GM12878 (cell line): ENCODE measurements at regions of chr10 and their contacts with region 1.

Region 1: GRCh38 chr10:71708301-71708703 is 11.3 kb downstream of the C10orf105 start:
- DNase-seq: no peak
- ATAC-seq: peak; percentile 88
- H3K4me3 ChIP-seq: no peak overlapping the region
- H3K27ac ChIP-seq: no peak overlapping the region
- H3K4me1 ChIP-seq: peaks cover 8% of the 10 kb centered on the region
- H3K27me3 ChIP-seq: no peaks in the 10 kb centered on the region; a peak in 1 of 4 replicates
- CTCF ChIP-seq: peak; percentile 82 to 97 (median 93)
- EP300 ChIP-seq: no peak
- POLR2A ChIP-seq: no peak
- RAD21 ChIP-seq: peak; percentile 89

Region 2: GRCh38 chr10:71314028-71314693 is 394.1 kb before region 1 on chr10:
- CTCF ChIA-PET with region 1: interaction called, 47 read pairs
- POLR2A ChIA-PET with region 1: no interaction called
- RAD21 ChIA-PET with region 1: interaction called, 28 read pairs
- SMC1A ChIA-PET with region 1: interaction called, 8 read pairs
- in situ Hi-C with region 1: loop called (anchors 5 kb)
- intact Hi-C with region 1: loop called (anchors 2 kb)
- DNase-seq: no peak
- ATAC-seq: peak; percentile 55
- H3K4me3 ChIP-seq: no peak overlapping the region
- H3K27ac ChIP-seq: no peak overlapping the region
- H3K4me1 ChIP-seq: peaks cover 12% of the 10 kb centered on the region
- H3K27me3 ChIP-seq: no peaks in the 10 kb centered on the region
- CTCF ChIP-seq: peak; percentile 62 to 91 (median 76)
- EP300 ChIP-seq: no peak
- POLR2A ChIP-seq: no peak
- RAD21 ChIP-seq: peak; percentile 74

Region 3: GRCh38 chr10:71462062-71462935 is 246.0 kb before region 1 on chr10:
- CTCF ChIA-PET with region 1: no interaction called
- POLR2A ChIA-PET with region 1: no interaction called
- RAD21 ChIA-PET with region 1: no interaction called
- SMC1A ChIA-PET with region 1: no interaction called
- in situ Hi-C with region 1: no loop called
- intact Hi-C with region 1: no loop called
- DNase-seq: no peak
- ATAC-seq: no peak
- H3K4me3 ChIP-seq: no peak overlapping the region
- H3K27ac ChIP-seq: no peak overlapping the region
- H3K4me1 ChIP-seq: no peaks in the 10 kb centered on the region
- H3K27me3 ChIP-seq: peaks cover 0 to 6% of the 10 kb centered on the region in 2 experiments; a peak in 3 of 4 replicates
- CTCF ChIP-seq: no peak
- EP300 ChIP-seq: no peak
- POLR2A ChIP-seq: no peak
- RAD21 ChIP-seq: no peak

Region 4: GRCh38 chr10:71486484-71487114 is 221.7 kb before region 1 on chr10:
- CTCF ChIA-PET with region 1: interaction called, 8 read pairs
- POLR2A ChIA-PET with region 1: no interaction called
- RAD21 ChIA-PET with region 1: interaction called, 8 read pairs
- SMC1A ChIA-PET with region 1: interaction called, 4 read pairs
- in situ Hi-C with region 1: no loop called
- intact Hi-C with region 1: loop called (anchors 5 kb)
- DNase-seq: no peak
- ATAC-seq: peak; percentile 89
- H3K4me3 ChIP-seq: no peak overlapping the region
- H3K27ac ChIP-seq: no peak overlapping the region
- H3K4me1 ChIP-seq: no peaks in the 10 kb centered on the region
- H3K27me3 ChIP-seq: peaks cover 0 to 2% of the 10 kb centered on the region in 2 experiments; a peak in 1 of 4 replicates
- CTCF ChIP-seq: peak; percentile 65 to 71 (median 71)
- EP300 ChIP-seq: no peak
- POLR2A ChIP-seq: no peak
- RAD21 ChIP-seq: peak; percentile 65

Region 5: DNA sequence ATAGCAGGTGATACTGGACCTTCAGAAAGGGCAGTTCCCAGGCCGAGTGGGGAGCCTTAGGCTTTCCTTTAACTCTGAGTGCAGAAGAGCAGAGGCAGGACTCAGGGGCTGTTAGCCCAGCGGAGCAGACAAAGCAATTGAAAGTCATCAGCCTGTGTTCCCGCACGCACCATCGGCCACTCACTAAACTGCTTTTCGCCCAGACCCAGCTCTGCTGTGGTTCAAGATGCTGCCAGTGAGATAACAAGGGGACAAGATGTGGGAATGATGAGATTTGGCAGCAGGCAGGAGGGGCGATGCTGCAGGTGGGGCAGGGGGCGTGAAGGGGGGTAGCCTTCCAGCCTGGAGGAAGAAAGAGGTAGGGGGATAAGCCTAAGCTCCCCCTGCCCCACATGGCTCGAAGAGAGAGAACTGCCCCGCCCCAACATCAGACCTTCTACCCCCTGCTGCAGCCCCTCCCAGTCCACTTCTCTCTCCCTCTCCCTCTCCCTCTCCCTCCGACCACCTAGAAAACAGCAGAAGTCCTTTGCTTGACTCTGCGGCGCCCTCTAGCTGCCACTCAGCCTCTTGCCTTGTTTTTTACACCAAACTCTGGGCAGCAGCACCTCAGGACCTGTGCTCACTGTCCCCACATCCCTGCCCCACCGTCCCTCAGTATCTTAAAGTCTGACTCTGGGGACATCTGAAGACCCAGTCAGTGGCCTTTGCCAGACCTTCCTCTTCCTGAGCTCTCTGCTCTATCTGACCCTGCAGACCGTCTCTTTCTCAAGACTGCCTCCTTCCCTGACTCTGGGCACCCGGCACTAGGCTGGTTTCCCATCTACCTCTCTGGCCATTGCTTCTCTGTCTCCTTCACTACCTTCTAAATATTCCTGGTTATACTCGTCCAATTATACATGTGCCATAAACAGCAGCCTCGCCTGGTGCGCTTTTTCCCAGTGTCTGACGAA is 99.2 kb before region 1 on chr10:
- CTCF ChIA-PET with region 1: interaction called, 16 read pairs
- POLR2A ChIA-PET with region 1: no interaction called
- RAD21 ChIA-PET with region 1: interaction called, 6 read pairs
- SMC1A ChIA-PET with region 1: interaction called, 8 read pairs
- in situ Hi-C with region 1: no loop called
- intact Hi-C with region 1: no loop called
- DNase-seq: no peak
- ATAC-seq: peak; percentile 82
- H3K4me3 ChIP-seq: no peak overlapping the region
- H3K27ac ChIP-seq: no peak overlapping the region
- H3K4me1 ChIP-seq: no peaks in the 10 kb centered on the region
- H3K27me3 ChIP-seq: no peaks in the 10 kb centered on the region; a peak in 2 of 4 replicates
- CTCF ChIP-seq: peak; percentile 75 to 84 (median 80)
- EP300 ChIP-seq: no peak
- POLR2A ChIP-seq: no peak
- RAD21 ChIP-seq: peak; percentile 64

Region 6: DNA sequence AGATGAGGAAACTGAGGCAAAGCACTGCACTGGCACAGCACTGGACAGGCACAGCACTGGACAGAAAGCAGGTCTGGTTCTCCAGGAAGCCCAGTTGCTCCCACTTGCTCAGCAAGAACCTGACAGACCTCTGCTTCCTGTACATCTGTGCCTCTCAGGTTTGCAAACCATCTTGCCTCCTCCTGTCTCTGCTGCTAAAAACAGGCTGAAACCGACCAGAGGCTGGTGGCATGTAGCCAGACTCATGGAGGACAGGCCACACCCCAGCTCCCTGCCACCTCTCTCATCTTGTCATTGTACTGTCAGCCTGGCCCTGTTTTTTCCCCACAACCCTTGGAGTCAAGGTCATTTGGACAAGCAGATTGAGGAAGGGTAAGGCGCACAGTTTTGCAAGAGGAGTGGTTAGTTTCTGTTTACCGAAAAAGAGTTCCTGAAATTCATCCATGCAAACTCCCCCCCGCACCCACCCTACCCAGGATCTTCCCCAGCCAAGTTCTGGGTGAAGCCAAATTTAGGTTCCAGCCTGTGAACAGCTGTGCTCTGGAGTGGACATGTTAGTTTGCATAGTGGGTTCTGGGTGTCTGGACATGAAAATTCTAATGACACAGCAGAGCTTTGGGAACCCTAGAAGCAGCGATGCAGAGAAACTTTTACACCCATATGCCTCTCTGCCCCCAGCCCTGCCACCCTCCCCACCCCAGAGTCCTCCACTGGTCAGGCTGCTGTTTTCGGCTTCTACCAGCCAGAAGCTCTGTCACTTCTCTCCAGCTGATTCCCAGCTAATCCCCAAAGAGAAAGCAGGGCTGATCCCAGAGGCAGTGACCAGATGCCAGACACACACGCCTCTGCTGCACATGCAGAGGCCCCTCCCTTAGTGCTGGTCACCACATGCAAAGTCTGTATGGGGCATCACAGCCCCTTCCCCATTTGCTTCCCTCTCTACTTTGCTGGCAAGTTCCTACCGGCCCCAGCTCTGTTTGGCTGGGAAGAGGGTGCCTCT is 19.7 kb after region 1 on chr10:
- CTCF ChIA-PET with region 1: interaction called, 25 read pairs
- POLR2A ChIA-PET with region 1: no interaction called
- RAD21 ChIA-PET with region 1: interaction called, 4 read pairs
- SMC1A ChIA-PET with region 1: interaction called, 3 read pairs
- in situ Hi-C with region 1: no loop called
- intact Hi-C with region 1: no loop called
- DNase-seq: peak; percentile 90
- ATAC-seq: peak; percentile 76
- H3K4me3 ChIP-seq: peak overlapping the region; percentile 13; the same call in 1 of the 2 replicates
- H3K27ac ChIP-seq: peak overlapping the region; percentile 81
- H3K4me1 ChIP-seq: peaks cover 48% of the 10 kb centered on the region
- H3K27me3 ChIP-seq: no peaks in the 10 kb centered on the region
- CTCF ChIP-seq: no peak
- EP300 ChIP-seq: no peak
- POLR2A ChIP-seq: peak; percentile 79
- RAD21 ChIP-seq: no peak

Region 7: DNA sequence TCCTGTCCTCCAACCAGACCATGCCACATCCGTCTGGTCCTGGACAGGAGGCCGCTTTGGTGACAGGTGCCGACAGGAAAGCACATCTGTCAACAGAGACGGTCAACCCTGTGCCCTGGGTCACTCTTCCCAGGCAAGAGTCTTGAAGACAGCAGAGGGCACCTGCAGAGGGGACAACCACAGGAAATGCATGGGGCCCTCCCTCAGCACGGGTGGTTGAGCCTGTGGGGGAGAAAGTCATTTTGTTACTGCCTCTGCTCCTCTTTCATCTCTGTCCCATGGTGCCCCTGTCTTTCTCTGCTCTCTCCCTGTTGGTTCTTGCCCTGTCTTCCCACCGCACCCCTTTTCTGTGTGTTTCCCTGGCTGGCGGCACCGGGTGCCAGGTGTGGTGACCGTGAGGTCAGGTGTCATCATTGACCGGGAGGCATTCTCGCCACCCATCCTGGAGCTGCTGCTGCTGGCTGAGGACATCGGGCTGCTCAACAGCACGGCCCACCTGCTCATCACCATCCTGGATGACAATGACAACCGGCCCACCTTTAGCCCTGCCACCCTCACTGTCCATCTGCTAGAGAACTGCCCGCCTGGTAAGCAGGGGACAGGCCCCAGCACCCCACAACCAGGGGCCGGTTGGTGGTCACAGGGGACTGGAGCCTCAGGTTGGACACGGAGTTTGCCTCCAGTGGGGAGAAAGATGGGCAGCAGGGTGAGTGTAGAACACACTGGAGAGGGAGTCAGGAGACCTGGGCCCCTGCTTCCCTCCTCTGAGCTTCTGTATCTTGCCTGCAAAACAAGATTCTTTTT is 82.6 kb after region 1 on chr10:
- CTCF ChIA-PET with region 1: no interaction called
- POLR2A ChIA-PET with region 1: no interaction called
- RAD21 ChIA-PET with region 1: no interaction called
- SMC1A ChIA-PET with region 1: no interaction called
- in situ Hi-C with region 1: no loop called
- intact Hi-C with region 1: no loop called
- DNase-seq: no peak
- ATAC-seq: peak; percentile 94
- H3K4me3 ChIP-seq: no peak overlapping the region
- H3K27ac ChIP-seq: no peak overlapping the region
- H3K4me1 ChIP-seq: peaks cover 10% of the 10 kb centered on the region
- H3K27me3 ChIP-seq: no peaks in the 10 kb centered on the region; a peak in 1 of 4 replicates
- CTCF ChIP-seq: no peak
- EP300 ChIP-seq: no peak
- POLR2A ChIP-seq: no peak
- RAD21 ChIP-seq: no peak

Region 8: DNA sequence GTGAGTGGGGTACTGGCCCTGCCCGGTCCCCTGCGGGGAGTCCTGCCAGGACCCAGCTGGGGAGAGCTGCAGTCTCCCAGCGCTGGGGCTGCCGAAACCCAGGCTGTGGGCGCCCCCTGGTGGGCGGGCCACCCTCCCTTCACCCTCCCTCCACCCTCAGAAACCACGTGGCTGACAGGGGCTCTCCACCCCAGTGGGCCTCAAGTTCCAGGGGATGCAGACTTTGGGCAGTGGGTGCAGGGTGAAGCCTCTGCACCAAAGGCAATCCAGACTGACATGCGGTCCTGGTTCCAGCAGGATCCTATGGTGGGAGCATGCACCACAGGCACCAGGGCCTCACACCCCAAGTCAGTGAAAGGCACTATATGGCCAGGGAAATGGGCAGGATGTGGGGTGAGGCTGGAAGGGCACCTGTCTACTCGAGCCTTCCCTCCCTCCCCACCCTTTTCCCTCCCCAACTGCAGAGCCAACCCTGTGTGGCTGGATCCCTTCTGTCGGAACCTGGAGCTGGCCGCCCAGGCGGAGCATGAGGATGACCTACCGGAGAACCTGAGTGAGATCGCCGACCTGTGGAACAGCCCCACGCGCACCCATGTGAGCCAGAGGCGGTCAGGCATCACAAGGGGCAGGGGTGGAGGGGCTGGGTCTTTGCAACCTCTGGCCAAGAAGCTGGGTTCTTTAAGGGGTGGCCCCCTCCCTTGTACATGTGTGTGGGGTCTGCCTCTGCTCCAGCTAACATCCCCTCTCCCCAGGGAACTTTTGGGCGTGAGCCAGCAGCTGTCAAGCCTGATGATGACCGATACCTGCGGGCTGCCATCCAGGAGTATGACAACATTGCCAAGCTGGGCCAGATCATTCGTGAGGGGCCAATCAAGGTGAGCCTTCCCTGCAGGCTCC is 104.0 kb after region 1 on chr10:
- CTCF ChIA-PET with region 1: interaction called, 8 read pairs
- POLR2A ChIA-PET with region 1: interaction called, 3 read pairs
- RAD21 ChIA-PET with region 1: interaction called, 6 read pairs
- SMC1A ChIA-PET with region 1: no interaction called
- in situ Hi-C with region 1: no loop called
- intact Hi-C with region 1: loop called (anchors 5 kb)
- DNase-seq: no peak
- ATAC-seq: peak; percentile 99
- H3K4me3 ChIP-seq: no peak overlapping the region
- H3K27ac ChIP-seq: no peak overlapping the region
- H3K4me1 ChIP-seq: peaks cover 3% of the 10 kb centered on the region; the same call in 1 of the 2 replicates
- H3K27me3 ChIP-seq: no peaks in the 10 kb centered on the region
- CTCF ChIP-seq: peak; percentile 81 to 89 (median 82)
- EP300 ChIP-seq: no peak
- POLR2A ChIP-seq: peak; percentile 32; the same call in 1 of the 2 replicates
- RAD21 ChIP-seq: peak; percentile 84

Region 9: DNA sequence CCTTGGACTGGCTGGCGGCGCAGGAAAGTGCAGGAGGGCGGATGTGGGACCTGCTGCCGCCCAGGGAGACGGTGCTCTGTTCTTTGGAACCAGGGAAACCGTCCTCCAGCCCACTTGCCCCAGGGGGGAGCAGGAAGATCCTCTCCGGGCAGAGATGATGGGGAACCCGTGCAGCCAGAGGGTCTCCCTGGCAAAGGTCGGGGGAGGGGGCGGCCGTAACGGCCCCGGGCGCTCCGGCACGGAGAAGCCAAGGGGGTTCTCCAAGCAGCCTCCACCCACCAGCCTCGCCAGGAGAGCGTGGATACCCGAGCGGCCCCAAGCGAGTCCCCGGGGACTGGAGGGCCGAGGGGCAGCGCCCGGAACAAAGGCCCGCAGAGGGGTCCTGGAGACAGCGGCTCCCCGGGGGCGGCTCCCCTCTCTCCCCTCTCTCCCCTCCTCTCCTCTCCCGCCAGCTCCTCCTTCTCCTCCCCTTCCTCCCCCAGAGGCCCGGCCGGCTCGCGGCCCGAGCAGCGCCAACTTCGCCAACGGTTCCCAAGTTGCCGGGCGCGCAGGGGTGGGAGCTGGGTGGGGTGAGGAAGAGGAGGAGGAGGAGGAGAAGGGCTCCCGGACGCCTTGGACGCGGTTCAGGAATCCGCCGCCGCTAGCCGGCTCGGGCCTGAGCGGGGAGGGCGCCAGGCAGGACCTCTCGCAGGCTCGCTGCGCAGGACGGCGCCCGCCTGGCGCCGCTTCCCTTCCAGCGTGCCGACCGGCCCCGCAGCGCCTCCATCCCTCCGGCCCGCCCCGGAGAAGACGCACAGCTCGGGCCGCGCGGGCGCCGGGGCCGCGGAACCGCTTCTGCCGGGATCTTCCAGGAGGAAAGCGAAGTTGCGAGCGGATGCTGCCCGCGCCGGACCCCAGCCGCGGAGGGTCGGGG is 255.7 kb after region 1 on chr10 and contains the start of gene CHST3:
- CTCF ChIA-PET with region 1: no interaction called
- POLR2A ChIA-PET with region 1: no interaction called
- RAD21 ChIA-PET with region 1: no interaction called
- SMC1A ChIA-PET with region 1: no interaction called
- in situ Hi-C with region 1: no loop called
- intact Hi-C with region 1: no loop called
- DNase-seq: no peak
- ATAC-seq: peak; percentile 75
- H3K4me3 ChIP-seq: peak within 1 kb of the TSS; percentile 16
- H3K27ac ChIP-seq: no peak within 1 kb of the TSS
- H3K4me1 ChIP-seq: no peaks in the 10 kb centered on the region
- H3K27me3 ChIP-seq: peaks cover 0 to 3% of the 10 kb centered on the region in 2 experiments; a peak in 2 of 4 replicates
- CTCF ChIP-seq: no peak
- EP300 ChIP-seq: no peak
- POLR2A ChIP-seq: no peak
- RAD21 ChIP-seq: no peak
- polyA plus RNA-seq, gene CHST3: 0.04 TPM in 1 of 2 experiments, not detected in the other